Prostate gland (tissue), 2 donors: ENCODE measurements at regions of chr1 and their contacts with region 1.

Region 1: DNA sequence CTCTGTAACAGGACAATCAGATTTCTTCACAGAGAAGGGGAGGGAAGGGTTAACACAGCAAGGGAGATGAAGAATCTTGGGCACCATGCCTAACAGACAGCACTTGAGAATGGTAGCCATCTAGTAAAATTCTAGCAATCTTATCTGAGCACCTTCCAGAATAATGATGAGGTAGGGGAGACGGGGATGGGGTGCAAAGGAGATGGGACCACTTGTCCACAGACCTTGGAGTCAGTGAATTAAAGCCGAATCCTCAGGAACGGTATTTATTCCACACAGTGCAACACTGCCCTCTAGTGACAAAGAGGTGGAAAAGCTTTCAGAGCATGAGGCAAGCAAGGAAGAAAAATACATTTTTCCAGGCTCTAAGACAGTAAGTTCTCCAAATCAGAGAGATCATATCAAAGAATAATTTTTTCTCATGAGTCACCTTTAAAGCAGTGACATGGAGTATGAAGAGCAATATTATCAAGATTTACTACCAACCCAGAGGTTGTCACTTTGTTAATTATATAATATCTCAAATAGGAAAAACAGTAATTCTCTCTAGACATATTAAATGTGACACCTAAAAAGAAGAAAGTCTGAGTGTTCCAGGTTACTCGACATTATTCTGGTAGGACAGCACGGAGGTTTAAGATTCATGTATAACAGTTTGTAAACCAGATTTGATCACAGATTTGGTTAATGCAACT is 43.3 kb upstream of the LPAR3 start:
- DNase-seq: peak; percentile 56
- H3K4me3 ChIP-seq: no peak overlapping the region
- H3K27ac ChIP-seq: no peak overlapping the region
- H3K4me1 ChIP-seq: no peaks in the 10 kb centered on the region
- H3K27me3 ChIP-seq: no peaks in the 10 kb centered on the region
- CTCF ChIP-seq: peak; percentile 69 to 92 (median 88)
- POLR2A ChIP-seq: no peak

Region 2: GRCh38 chr1:84772428-84772943 is 163.8 kb before region 1 on chr1:
- intact Hi-C with region 1: loop called (anchors 10 kb)
- DNase-seq: peak; percentile 89
- H3K4me3 ChIP-seq: no peak overlapping the region
- H3K27ac ChIP-seq: peak overlapping the region in 1 of 2 donors; percentile 59
- H3K4me1 ChIP-seq: peaks cover 5% of the 10 kb centered on the region
- H3K27me3 ChIP-seq: no peaks in the 10 kb centered on the region
- CTCF ChIP-seq: peak; percentile 90 to 93 (median 91)
- POLR2A ChIP-seq: no peak

Region 3: DNA sequence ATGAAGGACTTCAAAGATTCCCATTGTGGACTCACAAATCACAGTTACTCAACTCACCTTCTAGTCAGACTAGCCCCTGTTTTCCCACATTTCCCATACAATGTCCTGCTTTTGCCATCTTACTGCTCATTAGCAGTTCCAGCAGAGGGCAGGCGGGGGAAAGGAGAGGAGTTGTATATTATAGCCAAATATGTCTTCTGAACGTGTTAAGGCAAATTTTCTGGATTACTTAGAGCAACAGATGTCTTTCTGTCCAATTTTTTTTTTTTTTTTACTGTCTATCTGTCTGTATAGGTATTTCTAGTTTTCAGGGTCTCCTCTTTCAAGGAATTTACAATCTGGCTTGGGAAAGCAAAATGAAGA is 558.6 kb after region 1 on chr1:
- intact Hi-C with region 1: no loop called
- DNase-seq: peak; percentile 54
- H3K4me3 ChIP-seq: no peak overlapping the region
- H3K27ac ChIP-seq: no peak overlapping the region
- H3K4me1 ChIP-seq: peaks cover 3% of the 10 kb centered on the region
- H3K27me3 ChIP-seq: no peaks in the 10 kb centered on the region
- CTCF ChIP-seq: peak in 2 of 4 experiments; percentile 23 to 41
- POLR2A ChIP-seq: no peak